Heart left ventricle (tissue), 16 donors: ENCODE measurements at regions of chr15 and their contacts with region 1.

Region 1: DNA sequence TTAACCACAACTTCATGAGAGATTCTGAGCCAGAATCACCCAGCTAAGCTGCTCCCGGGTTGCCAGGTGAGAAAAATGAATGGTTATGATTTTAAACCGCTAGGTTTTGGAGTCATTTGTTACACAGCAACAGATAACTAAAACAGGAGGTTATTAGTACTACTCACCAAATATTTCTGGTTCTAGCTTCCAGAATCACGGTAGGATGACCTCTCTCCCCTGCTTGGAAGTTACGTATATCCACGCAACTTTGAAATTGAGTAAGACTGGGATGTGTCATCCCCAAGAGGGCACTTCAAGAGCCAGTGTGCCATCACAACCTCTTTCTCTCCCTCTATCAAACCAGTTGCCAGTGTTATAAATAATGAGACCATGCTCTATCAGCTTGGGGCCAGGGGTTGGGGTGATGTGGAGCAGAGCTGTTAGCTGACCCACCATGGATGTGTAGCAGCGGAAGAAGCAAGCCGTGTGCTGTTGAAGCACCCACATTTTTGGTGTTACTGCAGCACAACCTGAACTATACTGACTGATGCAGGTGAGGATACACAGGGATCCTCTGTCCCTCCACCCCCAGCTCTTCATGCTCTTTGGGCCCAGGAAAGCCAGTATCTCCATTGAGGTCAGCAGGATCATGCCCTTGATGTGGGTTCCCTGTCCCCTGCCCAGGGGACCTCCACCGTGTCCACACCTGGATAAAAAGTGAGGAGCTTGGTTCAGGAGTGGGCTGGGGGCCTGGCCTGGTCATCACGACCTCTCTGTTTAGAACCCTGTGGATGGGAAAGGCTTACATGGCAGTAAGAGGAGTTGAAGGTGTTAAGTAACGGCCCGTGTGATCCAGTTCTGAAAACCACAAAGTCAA is 19.4 kb upstream of the ALDH1A3 start:
- DNase-seq: no peak
- ATAC-seq: no peak
- H3K4me3 ChIP-seq: no peak overlapping the region
- H3K27ac ChIP-seq: no peak overlapping the region
- H3K4me1 ChIP-seq: peaks cover 0 to 5% (median 0%) of the 10 kb centered on the region in 12 donors
- H3K27me3 ChIP-seq: peaks cover 0 to 3% (median 0%) of the 10 kb centered on the region in 9 donors
- CTCF ChIP-seq: no peak
- POLR2A ChIP-seq: no peak

Region 2: DNA sequence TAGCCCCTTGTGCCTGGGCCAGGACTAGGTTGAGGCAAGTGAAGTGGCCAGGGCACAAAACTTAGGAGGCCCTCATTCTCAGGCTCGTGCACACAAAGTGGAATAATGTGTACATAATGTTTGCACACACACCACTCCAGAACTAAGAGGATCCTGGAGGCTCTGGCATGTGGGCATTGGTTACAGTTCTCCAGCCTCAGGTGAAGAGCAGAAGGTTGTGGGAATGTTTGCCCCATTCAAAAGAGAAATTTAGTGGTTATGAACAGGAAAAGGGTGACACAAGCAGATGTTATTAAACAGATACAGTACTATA is 226.5 kb before region 1 on chr15:
- intact Hi-C with region 1: loop called in 1 of 10 experiments (anchors 5 kb)
- DNase-seq: no peak
- ATAC-seq: no peak
- H3K4me3 ChIP-seq: no peak overlapping the region
- H3K27ac ChIP-seq: no peak overlapping the region
- H3K4me1 ChIP-seq: peaks cover 0 to 4% (median 0%) of the 10 kb centered on the region in 12 donors
- H3K27me3 ChIP-seq: no peaks in the 10 kb centered on the region
- CTCF ChIP-seq: no peak
- POLR2A ChIP-seq: no peak

Region 3: DNA sequence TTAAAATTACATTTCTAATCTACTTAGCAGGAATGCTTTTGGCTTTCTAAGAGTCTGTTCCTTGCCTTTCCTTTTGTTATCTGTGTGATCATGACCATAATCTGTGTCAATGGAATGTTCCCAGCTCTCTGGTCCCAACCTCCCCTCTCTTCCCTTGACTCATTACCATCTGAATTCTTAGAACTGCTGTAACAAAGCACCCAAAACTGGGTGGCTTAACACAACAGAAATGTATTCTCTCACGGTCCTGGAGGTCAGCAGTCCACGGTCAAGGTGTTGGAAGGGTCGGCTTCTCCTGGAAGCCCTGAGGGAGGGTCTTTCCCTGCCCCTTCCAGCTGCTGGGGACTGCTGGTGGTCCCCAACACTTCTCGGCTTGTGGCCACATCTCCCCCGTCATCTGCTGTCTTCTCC is 140.1 kb after region 1 on chr15:
- intact Hi-C with region 1: no loop called
- DNase-seq: no peak
- ATAC-seq: no peak
- H3K4me3 ChIP-seq: no peak overlapping the region
- H3K27ac ChIP-seq: no peak overlapping the region
- H3K4me1 ChIP-seq: peaks cover 0 to 4% (median 0%) of the 10 kb centered on the region in 12 donors
- H3K27me3 ChIP-seq: no peaks in the 10 kb centered on the region
- CTCF ChIP-seq: no peak
- POLR2A ChIP-seq: no peak

Region 4: DNA sequence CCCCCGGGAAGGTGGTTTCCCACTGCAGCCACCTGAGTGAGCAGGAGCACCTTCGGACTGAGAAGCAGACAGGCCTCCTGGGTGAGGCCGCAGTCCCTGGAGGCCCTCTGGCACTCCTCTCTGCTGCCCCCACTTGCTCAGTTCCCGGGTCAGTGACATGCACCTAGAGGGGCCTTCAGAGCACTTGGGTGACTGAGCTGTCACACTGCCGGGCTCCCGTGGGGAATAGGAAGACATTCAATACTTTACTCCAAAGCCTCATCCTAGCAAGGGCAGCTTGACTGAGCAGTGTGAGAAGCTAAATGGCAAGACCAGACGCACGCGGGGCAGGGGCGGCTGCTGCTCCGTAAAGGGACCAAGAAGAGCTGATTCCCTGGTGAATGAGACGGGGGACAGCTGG is 566.7 kb after region 1 on chr15:
- intact Hi-C with region 1: no loop called
- DNase-seq: no peak
- ATAC-seq: no peak
- H3K4me3 ChIP-seq: no peak overlapping the region
- H3K27ac ChIP-seq: no peak overlapping the region
- H3K4me1 ChIP-seq: no peaks in the 10 kb centered on the region
- H3K27me3 ChIP-seq: no peaks in the 10 kb centered on the region
- CTCF ChIP-seq: no peak
- POLR2A ChIP-seq: no peak